Aorta (tissue), 5 donors: ENCODE measurements at regions of chr3 and their contacts with region 1.

Region 1: DNA sequence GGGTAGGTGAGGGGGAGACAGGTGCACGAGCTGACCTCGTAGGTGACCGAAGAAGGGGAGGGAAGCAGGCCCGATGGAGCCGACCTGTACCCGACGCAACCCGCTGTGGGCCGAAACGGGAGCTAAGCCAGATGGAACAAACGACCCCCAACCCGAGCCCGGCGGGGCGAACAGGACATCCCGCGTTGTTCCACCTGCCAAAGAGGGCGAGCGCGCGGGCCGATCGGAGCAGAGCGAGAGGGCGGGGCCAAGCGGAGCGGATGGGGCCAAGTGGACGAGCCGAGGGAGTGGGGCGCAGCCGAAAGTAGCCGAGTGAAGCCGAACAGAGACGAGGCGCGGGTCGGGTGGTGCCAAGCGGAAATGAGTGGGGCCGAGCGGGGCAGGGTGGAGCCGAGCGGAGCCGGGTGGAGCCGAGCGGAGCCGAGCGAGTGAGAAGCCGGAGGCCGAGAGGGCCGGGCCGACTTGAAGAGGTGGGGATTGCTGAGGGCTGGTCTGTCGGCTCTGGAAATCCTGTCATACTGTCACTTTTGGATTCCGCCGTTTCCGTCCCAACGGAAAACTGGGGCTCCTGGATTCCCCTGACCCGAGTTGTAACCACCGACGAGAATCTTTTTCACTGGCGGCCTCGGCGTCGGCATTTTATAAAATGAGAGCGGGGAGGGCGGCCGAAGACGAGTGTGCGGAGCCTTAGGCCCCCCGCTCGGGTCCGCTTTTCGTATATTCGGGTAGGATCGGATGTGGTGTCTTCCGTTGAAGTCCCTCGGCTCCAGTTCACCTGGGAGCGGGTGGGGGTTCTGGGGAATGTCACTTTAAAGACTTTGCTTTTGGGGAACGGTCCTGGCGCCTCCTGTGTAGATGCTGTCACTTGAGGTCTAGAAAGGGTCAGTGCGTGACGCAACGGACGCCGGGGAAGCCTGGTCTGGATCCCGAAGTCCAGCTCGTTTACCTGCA is 15.6 kb upstream of the WNT7A start:
- DNase-seq: peak; percentile 96 to 99
- ATAC-seq: peak; percentile 98
- H3K4me3 ChIP-seq: peak overlapping the region; percentile 32 to 72
- H3K27ac ChIP-seq: no peak overlapping the region
- H3K4me1 ChIP-seq: no peaks in the 10 kb centered on the region
- H3K27me3 ChIP-seq: no peaks in the 10 kb centered on the region

Region 2: GRCh38 chr3:14178247-14179113 is 283.1 kb after region 1 on chr3 and contains the starts of genes LSM3 and XPC:
- intact Hi-C with region 1: loop called (anchors 10 kb)
- DNase-seq: peak; percentile 96 to 99
- ATAC-seq: peak; percentile 100
- H3K4me3 ChIP-seq: peak within 1 kb of the TSS; percentile 65 to 85
- H3K27ac ChIP-seq: peak within 1 kb of the TSS; percentile 68 to 97
- H3K4me1 ChIP-seq: peaks cover 0 to 9% of the 10 kb centered on the region in 2 donors
- H3K27me3 ChIP-seq: no peaks in the 10 kb centered on the region
- total RNA-seq, gene LSM3: 7.1 to 9.0 TPM
- total RNA-seq, gene XPC: 29.7 to 36.7 TPM

Region 3: DNA sequence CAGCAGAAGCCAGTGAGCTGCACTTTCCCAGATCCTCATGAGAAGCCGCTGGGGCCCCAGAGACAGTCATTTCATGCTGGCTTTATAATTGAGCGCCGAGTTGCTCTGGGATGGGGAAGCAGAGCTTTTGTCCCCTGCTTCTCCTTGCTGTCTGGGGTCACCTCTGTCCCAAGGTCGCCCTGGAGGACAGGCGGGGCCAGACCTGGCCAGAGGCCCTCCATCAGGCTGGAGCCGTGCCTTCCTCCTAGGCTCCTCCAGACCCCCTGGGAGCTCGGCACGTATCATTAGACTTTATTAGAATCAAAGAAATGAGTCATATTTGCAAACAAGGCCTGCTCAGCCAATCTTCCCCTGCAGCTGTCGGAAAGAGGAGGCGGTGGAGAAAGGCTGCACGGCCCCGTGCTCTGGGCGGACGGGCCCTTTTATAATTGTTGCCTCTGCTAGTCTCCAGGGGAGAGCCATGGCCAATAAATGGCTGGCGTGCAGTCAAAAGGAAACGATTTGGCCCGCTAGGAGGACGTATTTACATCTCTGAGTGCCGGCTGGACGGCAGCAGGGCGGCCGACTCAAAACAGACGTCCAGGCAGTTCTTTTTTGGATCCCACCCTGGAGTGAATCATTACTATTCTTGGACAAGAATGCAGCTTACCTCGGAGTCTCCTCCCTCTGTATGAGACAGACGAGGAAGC is 557.4 kb after region 1 on chr3:
- intact Hi-C with region 1: loop called in 1 of 2 experiments (anchors 10 kb)
- DNase-seq: peak; percentile 95 to 96
- ATAC-seq: peak; percentile 95
- H3K4me3 ChIP-seq: no peak overlapping the region
- H3K27ac ChIP-seq: peak overlapping the region in 1 of 2 donors; percentile 77
- H3K4me1 ChIP-seq: no peaks in the 10 kb centered on the region
- H3K27me3 ChIP-seq: no peaks in the 10 kb centered on the region

Region 4: GRCh38 chr3:14548321-14548729 is 652.9 kb after region 1 on chr3:
- intact Hi-C with region 1: loop called in 1 of 2 experiments (anchors 5 kb)
- DNase-seq: peak; percentile 75 to 83
- ATAC-seq: peak; percentile 81
- H3K4me3 ChIP-seq: no peak overlapping the region
- H3K27ac ChIP-seq: no peak overlapping the region
- H3K4me1 ChIP-seq: no peaks in the 10 kb centered on the region
- H3K27me3 ChIP-seq: peaks cover 0 to 2% of the 10 kb centered on the region in 2 donors